ENCODE measurements at regions of chr12 and their contacts with region 1.

Region 1: GRCh38 chr12:103956516-103957027 is 9.1 kb upstream of the TDG start:
- DNase-seq: no peak
- ATAC-seq: peak; percentile 37 to 58 (median 48)
- H3K4me3 ChIP-seq: peak overlapping the region; percentile 99
- H3K27ac ChIP-seq: peak overlapping the region; percentile 91
- H3K4me1 ChIP-seq: peaks cover 20% of the 10 kb centered on the region
- H3K27me3 ChIP-seq: no peaks in the 10 kb centered on the region
- CTCF ChIP-seq: no peak

Region 2: GRCh38 chr12:103986829-103987228 is 30.3 kb after region 1 on chr12:
- intact Hi-C with region 1: no loop called
- DNase-seq: no peak
- ATAC-seq: no peak
- H3K4me3 ChIP-seq: no peak overlapping the region
- H3K27ac ChIP-seq: no peak overlapping the region
- H3K4me1 ChIP-seq: no peaks in the 10 kb centered on the region
- H3K27me3 ChIP-seq: no peaks in the 10 kb centered on the region
- CTCF ChIP-seq: no peak

Region 3: GRCh38 chr12:104303538-104304151 is 347.1 kb after region 1 on chr12 and contains the start of gene EID3:
- intact Hi-C with region 1: loop called in 1 of 2 experiments (anchors 10 kb)
- DNase-seq: peak; percentile 92 to 96
- ATAC-seq: peak; percentile 98 to 100 (median 99)
- H3K4me3 ChIP-seq: peak within 1 kb of the TSS; percentile 61
- H3K27ac ChIP-seq: peak within 1 kb of the TSS; percentile 82
- H3K4me1 ChIP-seq: peaks cover 77% of the 10 kb centered on the region
- H3K27me3 ChIP-seq: no peaks in the 10 kb centered on the region
- CTCF ChIP-seq: no peak
- total RNA-seq, gene EID3: 0.94 to 1.3 (median 0.99) TPM

Measured in psoas muscle (tissue), 8 donors.